ENCODE measurements at regions of chr3 and their contacts with region 1.

Region 1: GRCh38 chr3:169478566-169479313 is 184.8 kb downstream of the MECOM start:
- DNase-seq: no peak
- H3K4me3 ChIP-seq: no peak overlapping the region
- H3K27ac ChIP-seq: no peak overlapping the region
- H3K4me1 ChIP-seq: no peaks in the 10 kb centered on the region
- H3K27me3 ChIP-seq: no peaks in the 10 kb centered on the region
- CTCF ChIP-seq: no peak
- EP300 ChIP-seq: no peak
- POLR2A ChIP-seq: no peak

Region 2: GRCh38 chr3:168414149-168414548 is 1064.6 kb before region 1 on chr3:
- in situ Hi-C with region 1: no loop called
- intact Hi-C with region 1: no loop called
- DNase-seq: no peak
- H3K4me3 ChIP-seq: no peak overlapping the region
- H3K27ac ChIP-seq: no peak overlapping the region
- H3K4me1 ChIP-seq: no peaks in the 10 kb centered on the region
- H3K27me3 ChIP-seq: no peaks in the 10 kb centered on the region
- CTCF ChIP-seq: no peak
- EP300 ChIP-seq: no peak
- POLR2A ChIP-seq: no peak

Region 3: GRCh38 chr3:169522600-169523529 is 44.1 kb after region 1 on chr3:
- in situ Hi-C with region 1: no loop called
- intact Hi-C with region 1: loop called (anchors 1 kb)
- DNase-seq: no peak
- H3K4me3 ChIP-seq: no peak overlapping the region
- H3K27ac ChIP-seq: no peak overlapping the region
- H3K4me1 ChIP-seq: no peaks in the 10 kb centered on the region
- H3K27me3 ChIP-seq: no peaks in the 10 kb centered on the region
- CTCF ChIP-seq: no peak
- EP300 ChIP-seq: no peak
- POLR2A ChIP-seq: no peak